Sigmoid colon (tissue), 7 donors: ENCODE measurements at regions of chr20 and their contacts with region 1.

Region 1: DNA sequence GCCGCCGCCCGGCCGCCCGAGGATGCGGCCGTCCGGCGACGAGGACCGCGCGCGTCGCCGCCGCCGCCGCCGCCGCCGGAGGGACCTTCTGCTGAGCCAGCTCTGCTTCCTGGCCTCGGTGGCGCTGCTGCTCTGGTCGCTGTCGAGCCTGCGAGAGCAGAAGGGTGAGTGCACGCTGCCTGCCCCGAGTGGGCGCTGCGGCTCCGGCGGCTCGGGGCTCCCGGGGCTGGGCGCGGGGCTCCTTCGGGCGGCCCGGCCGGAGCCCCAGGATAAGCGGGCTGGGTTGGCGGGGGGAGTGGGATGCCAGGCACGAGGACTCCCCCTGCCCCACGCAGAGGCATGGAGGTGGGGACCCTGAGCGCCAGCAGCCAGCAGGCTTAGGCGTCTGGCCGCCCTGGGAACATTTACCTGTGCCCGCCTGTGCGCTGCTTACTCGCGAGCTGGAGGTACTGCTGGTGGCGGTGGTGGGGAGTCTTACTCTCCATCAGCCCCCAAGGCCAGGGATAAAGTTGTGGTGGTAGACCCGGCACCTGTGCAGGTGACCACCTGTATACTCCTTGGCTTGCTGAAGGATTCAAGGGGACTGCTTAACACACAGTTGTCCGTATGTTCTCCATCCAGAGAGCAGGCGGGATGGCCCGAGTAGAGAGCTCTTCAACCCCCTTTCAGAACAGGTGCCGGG is 520 bp downstream of the SLC24A3 start:
- DNase-seq: peak; percentile 93
- H3K4me3 ChIP-seq: peak overlapping the region; percentile 47 to 74 (median 60)
- H3K27ac ChIP-seq: peak overlapping the region; percentile 49 to 84 (median 80)
- H3K4me1 ChIP-seq: peaks cover 0 to 41% (median 31%) of the 10 kb centered on the region in 4 donors
- H3K27me3 ChIP-seq: peaks cover 0 to 6% (median 0%) of the 10 kb centered on the region in 3 donors
- CTCF ChIP-seq: peak; percentile 42 to 69 (median 52)
- EP300 ChIP-seq: no peak
- POLR2A ChIP-seq: no peak

Region 2: DNA sequence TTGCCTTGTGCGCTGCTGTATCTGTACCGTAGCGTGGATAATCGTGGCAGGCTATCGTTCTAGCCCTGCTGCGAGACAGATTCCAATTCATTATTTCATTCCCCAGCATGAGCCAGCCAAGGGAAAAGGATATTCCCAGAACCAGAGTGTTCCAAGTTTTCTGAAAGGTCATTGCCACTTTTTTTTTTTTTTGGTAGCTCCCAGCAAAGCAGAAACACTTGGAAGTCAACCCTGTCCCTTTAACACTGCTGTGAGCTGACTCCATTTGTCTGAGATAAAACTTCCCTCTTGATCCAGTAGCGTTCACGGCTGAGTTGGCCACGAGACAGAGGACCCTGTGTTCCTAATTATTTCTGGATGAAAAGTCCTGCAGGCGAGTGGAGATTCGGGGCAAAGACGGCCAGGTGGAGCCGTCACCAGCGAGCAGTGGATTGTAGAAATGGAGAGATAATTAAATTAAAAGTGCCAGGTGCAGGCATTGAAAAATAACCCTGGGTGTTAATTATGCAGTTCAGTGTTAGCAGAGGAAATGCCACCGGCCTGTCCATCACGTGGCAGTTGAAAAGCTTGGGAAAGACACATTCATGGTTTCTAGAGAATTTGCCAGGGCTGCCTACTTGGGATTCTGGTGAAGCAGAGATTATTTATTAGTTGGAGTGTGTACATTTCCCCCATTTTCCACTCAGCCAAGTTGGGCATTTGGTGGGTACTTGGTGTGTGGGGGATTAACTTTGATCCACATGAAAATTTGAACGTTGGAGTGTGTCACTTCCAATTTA is 163.7 kb after region 1 on chr20:
- intact Hi-C with region 1: loop called (anchors 5 kb)
- DNase-seq: no peak
- H3K4me3 ChIP-seq: no peak overlapping the region
- H3K27ac ChIP-seq: peak overlapping the region in 1 of 4 donors; percentile 31
- H3K4me1 ChIP-seq: peaks cover 0 to 50% (median 28%) of the 10 kb centered on the region in 4 donors
- H3K27me3 ChIP-seq: no peaks in the 10 kb centered on the region
- CTCF ChIP-seq: no peak
- EP300 ChIP-seq: no peak
- POLR2A ChIP-seq: no peak

Region 3: DNA sequence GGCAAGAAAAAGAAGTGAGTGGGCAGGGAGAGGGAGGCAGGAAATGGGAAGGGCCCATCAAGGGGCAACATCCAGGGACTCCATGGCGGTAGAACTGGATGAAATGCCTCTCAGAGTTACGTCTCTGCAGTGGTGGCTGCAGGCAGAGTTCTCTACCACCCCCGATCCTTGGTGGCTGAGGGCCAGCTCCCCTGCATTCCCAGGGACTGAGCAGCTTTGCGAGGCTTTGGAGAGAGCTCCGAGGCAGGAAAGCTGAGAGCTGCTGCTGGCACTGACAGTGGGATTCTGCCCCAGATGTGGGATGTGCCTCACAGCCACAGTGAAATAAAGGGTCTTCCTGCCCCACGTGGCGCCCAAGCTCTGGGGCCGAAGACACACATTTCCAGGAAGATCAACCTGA is 236.1 kb after region 1 on chr20:
- intact Hi-C with region 1: loop called (anchors 5 kb)
- DNase-seq: peak; percentile 79
- H3K4me3 ChIP-seq: no peak overlapping the region
- H3K27ac ChIP-seq: peak overlapping the region in 3 of 4 donors; percentile 59 to 69 (median 68)
- H3K4me1 ChIP-seq: peaks cover 0 to 57% (median 55%) of the 10 kb centered on the region in 4 donors
- H3K27me3 ChIP-seq: no peaks in the 10 kb centered on the region
- CTCF ChIP-seq: no peak
- EP300 ChIP-seq: no peak
- POLR2A ChIP-seq: no peak

Region 4: GRCh38 chr20:19583532-19584175 is 370.7 kb after region 1 on chr20:
- intact Hi-C with region 1: loop called (anchors 2 kb)
- DNase-seq: peak; percentile 80
- H3K4me3 ChIP-seq: no peak overlapping the region
- H3K27ac ChIP-seq: no peak overlapping the region
- H3K4me1 ChIP-seq: peaks cover 0 to 7% (median 6%) of the 10 kb centered on the region in 4 donors
- H3K27me3 ChIP-seq: no peaks in the 10 kb centered on the region
- CTCF ChIP-seq: peak; percentile 61 to 86 (median 83)
- EP300 ChIP-seq: no peak
- POLR2A ChIP-seq: no peak

Region 5: GRCh38 chr20:19621072-19621471 is 408.1 kb after region 1 on chr20:
- intact Hi-C with region 1: no loop called
- DNase-seq: no peak
- H3K4me3 ChIP-seq: no peak overlapping the region
- H3K27ac ChIP-seq: no peak overlapping the region
- H3K4me1 ChIP-seq: no peaks in the 10 kb centered on the region
- H3K27me3 ChIP-seq: no peaks in the 10 kb centered on the region
- CTCF ChIP-seq: no peak
- EP300 ChIP-seq: no peak
- POLR2A ChIP-seq: no peak